ENCODE measurements at regions of chr17 and their contacts with region 1.

Region 1: DNA sequence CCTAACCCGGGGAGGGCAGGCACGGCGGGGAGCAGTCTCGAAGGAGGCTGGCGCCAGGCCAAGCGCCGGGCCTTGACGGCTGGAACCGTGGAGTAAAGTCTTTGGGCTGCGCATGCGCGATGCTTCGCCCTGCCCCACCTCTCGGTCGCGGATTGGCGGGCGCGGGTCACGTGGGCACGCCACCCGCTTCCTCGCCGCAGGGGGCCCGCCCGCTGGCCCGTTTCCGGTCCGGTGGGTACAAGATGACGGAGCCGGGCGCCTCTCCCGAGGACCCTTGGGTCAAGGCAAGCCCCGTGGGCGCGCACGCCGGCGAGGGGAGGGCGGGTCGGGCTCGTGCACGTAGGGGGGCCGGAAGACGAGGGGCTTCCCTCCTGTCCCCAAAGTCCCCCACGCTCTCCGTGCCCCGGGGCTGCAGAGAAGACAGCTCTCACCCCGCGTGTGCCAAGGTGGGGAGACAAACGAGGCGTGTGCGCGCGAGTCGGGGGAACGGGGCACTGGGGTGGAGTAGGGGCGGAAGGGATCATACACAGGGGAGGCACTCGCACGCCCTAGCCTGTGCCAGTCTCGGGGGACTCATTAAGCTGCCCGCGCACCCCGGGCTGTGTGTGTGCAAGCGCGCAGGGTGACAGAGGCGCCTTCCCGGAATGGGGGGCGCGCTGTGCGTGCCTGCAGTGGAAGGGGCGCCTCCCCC is at the start of gene MLX:
- DNase-seq: peak; percentile 94
- ATAC-seq: peak; percentile 80
- H3K4me3 ChIP-seq: peak within 1 kb of the TSS; percentile 66 to 88 (median 74)
- H3K4me3 Mint-ChIP-seq: peak within 1 kb of the TSS; percentile 99
- H3K27ac ChIP-seq: peak within 1 kb of the TSS; percentile 76 to 78
- H3K27ac Mint-ChIP-seq: peak within 1 kb of the TSS; percentile 98
- H3K4me1 ChIP-seq: peaks cover 26 to 42% of the 10 kb centered on the region in 2 donors
- H3K4me1 Mint-ChIP-seq: peaks cover 35% of the 10 kb centered on the region
- H3K27me3 ChIP-seq: no peaks in the 10 kb centered on the region
- H3K27me3 Mint-ChIP-seq: no peaks in the 10 kb centered on the region
- CTCF ChIP-seq: no peak
- total RNA-seq, gene MLX: 66.6 and 71.5 TPM in 2 replicates

Region 2: DNA sequence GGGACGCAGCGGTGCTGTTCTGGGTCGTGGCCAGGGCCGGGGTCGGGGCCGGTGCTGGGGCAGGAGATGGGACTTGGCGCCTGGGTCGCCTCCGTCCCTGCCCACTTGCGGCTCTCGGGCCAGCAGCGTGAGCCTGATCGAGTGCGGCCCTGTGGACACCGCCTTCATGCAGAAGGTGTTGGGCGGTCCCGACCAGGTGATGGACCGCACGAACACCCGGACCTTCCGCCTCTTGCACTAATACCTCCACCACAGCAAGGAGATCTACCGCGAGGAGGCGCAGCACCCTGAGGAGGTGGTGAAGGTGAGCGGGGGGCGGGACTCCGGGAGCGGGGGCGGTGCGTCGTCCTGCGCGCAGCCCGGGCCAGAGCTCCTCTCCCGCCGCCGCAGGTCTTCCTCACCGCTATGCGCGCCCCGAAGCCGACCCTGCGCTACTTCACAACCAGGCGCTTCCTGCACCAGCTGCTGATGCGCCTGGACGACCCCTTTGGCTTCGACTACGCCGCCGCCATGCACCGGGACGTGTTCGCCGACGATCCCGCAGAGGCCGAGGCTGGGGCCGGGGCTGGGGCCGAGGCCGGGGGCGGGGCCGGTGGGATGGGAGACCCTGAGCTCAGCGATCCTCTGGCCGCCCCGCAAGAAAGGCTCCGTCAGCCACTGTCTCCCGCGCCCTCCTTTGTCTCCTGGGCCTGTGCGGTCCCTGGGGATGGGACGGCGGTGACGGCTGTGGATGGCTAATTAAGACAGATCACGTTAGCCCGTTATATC is 18.8 kb before region 1 on chr17:
- CTCF ChIA-PET with region 1: interaction called, 15 read pairs
- POLR2A ChIA-PET with region 1: interaction called, 6 read pairs
- intact Hi-C with region 1: loop called (anchors 1 kb)
- DNase-seq: peak; percentile 89
- ATAC-seq: peak; percentile 97
- H3K4me3 ChIP-seq: peak overlapping the region in 4 of 5 experiments; percentile 45 to 66 (median 53)
- H3K4me3 Mint-ChIP-seq: peak overlapping the region; percentile 74
- H3K27ac ChIP-seq: no peak overlapping the region
- H3K27ac Mint-ChIP-seq: no peak overlapping the region
- H3K4me1 ChIP-seq: peaks cover 10 to 18% of the 10 kb centered on the region in 2 donors
- H3K4me1 Mint-ChIP-seq: peaks cover 17% of the 10 kb centered on the region
- H3K27me3 ChIP-seq: no peaks in the 10 kb centered on the region
- H3K27me3 Mint-ChIP-seq: no peaks in the 10 kb centered on the region
- CTCF ChIP-seq: peak; percentile 74

Region 3: GRCh38 chr17:42554250-42555121 is 12.5 kb before region 1 on chr17:
- CTCF ChIA-PET with region 1: interaction called, 8 read pairs
- POLR2A ChIA-PET with region 1: interaction called, 18 read pairs
- intact Hi-C with region 1: loop called (anchors 1 kb)
- DNase-seq: peak; percentile 94
- ATAC-seq: peak; percentile 91
- H3K4me3 ChIP-seq: peak overlapping the region; percentile 61 to 99 (median 90)
- H3K4me3 Mint-ChIP-seq: peak overlapping the region; percentile 96
- H3K27ac ChIP-seq: peak overlapping the region; percentile 88 to 96
- H3K27ac Mint-ChIP-seq: peak overlapping the region; percentile 98
- H3K4me1 ChIP-seq: peaks cover 15 to 27% of the 10 kb centered on the region in 2 donors
- H3K4me1 Mint-ChIP-seq: peaks cover 20% of the 10 kb centered on the region
- H3K27me3 ChIP-seq: no peaks in the 10 kb centered on the region
- H3K27me3 Mint-ChIP-seq: no peaks in the 10 kb centered on the region
- CTCF ChIP-seq: no peak

Region 4: DNA sequence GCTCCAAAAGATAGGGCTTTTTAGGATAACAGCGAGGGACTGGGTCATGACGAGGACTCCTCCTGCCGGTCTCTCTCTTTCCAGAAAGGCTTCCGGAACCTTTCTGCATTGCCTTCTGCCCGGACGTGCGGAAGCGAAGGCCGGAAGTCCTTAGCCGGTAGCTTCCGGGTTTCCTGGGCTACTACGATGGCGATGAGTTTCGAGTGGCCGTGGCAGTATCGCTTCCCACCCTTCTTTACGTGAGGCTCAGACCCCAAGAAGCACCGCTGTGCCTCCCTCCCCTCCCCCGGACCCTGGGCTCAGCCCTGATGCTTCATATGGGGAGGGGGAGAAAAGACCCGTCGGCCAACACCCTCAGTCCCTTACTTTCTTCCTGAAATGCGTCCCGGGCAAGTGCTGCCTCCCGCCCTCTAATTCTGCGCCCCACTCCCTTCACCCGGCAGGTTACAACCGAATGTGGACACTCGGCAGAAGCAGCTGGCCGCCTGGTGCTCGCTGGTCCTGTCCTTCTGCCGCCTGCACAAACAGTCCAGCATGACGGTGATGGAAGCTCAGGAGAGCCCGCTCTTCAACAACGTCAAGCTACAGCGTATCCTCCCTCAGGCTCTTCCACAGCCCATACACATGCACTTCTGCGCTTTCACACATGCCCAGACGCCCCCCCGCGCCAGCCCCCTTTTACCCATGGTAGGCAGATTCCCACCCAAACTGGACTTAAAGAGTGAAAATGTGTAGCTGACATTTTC is 206.4 kb after region 1 on chr17 and contains the start of gene VPS25:
- CTCF ChIA-PET with region 1: no interaction called
- POLR2A ChIA-PET with region 1: no interaction called
- intact Hi-C with region 1: no loop called
- DNase-seq: peak; percentile 87
- ATAC-seq: peak; percentile 89
- H3K4me3 ChIP-seq: peak within 1 kb of the TSS; percentile 71 to 88 (median 82)
- H3K4me3 Mint-ChIP-seq: peak within 1 kb of the TSS; percentile 99
- H3K27ac ChIP-seq: peak within 1 kb of the TSS; percentile 81 to 85
- H3K27ac Mint-ChIP-seq: peak within 1 kb of the TSS; percentile 98
- H3K4me1 ChIP-seq: peaks cover 16 to 17% of the 10 kb centered on the region in 2 donors
- H3K4me1 Mint-ChIP-seq: peaks cover 23% of the 10 kb centered on the region
- H3K27me3 ChIP-seq: no peaks in the 10 kb centered on the region
- H3K27me3 Mint-ChIP-seq: no peaks in the 10 kb centered on the region
- CTCF ChIP-seq: no peak
- total RNA-seq, gene VPS25: 38.7 and 38.8 TPM in 2 replicates

Measured in B cell (primary cell).